Activated naive CD4-positive, alpha-beta T cell treated with anti-CD3 and anti-CD28 coated beads for 36 hours (primary cell): ENCODE measurements at regions of chr17 and their contacts with region 1.

Region 1: GRCh38 chr17:50865984-50866774 is at the start of gene TOB1:
- DNase-seq: peak; percentile 97
- H3K4me3 Mint-ChIP-seq: peak within 1 kb of the TSS; percentile 97
- H3K27ac Mint-ChIP-seq: peak within 1 kb of the TSS; percentile 96
- H3K4me1 Mint-ChIP-seq: peaks cover 45% of the 10 kb centered on the region
- H3K27me3 Mint-ChIP-seq: no peaks in the 10 kb centered on the region
- total RNA-seq, gene TOB1: 40.7 to 44.7 TPM

Region 2: GRCh38 chr17:50707289-50708049 is 158.7 kb before region 1 on chr17 and contains the start of gene ANKRD40:
- CTCF ChIA-PET with region 1: no interaction called
- intact Hi-C with region 1: loop called (anchors 5 kb)
- DNase-seq: peak; percentile 94
- H3K4me3 Mint-ChIP-seq: peak within 1 kb of the TSS; percentile 95
- H3K27ac Mint-ChIP-seq: peak within 1 kb of the TSS; percentile 92
- H3K4me1 Mint-ChIP-seq: peaks cover 44% of the 10 kb centered on the region
- H3K27me3 Mint-ChIP-seq: no peaks in the 10 kb centered on the region
- total RNA-seq, gene ANKRD40: 25.7 to 26.5 TPM

Region 3: GRCh38 chr17:50771991-50772785 is 94.0 kb before region 1 on chr17:
- CTCF ChIA-PET with region 1: no interaction called
- intact Hi-C with region 1: no loop called
- DNase-seq: no peak
- H3K4me3 Mint-ChIP-seq: no peak overlapping the region
- H3K27ac Mint-ChIP-seq: no peak overlapping the region
- H3K4me1 Mint-ChIP-seq: no peaks in the 10 kb centered on the region
- H3K27me3 Mint-ChIP-seq: no peaks in the 10 kb centered on the region

Region 4: DNA sequence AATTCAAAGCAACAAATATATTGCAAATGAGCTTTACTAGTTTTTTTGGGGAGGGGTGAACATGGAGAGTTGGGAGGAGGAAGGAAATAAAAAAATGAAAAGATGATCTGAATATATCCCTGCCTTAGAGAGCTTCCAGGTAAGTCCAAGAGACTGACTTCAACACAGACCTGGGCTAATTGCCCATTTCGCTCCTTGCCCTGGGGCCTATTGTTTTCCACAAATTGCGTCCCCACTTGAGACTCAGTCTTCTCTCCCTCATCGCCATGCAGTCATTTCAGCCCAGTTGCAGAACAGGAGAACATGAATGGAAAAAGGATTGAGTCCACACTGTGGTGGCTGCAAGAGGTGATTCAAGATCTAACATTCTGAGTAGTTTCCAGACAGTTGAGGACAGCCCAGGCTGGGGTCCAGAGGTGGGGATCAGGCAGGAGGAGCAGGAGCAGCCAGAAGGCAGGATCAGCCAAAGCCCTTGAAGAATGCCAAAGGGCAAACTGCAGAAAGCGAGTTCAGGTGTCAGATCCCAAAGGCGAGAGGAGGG is 21.6 kb after region 1 on chr17:
- CTCF ChIA-PET with region 1: interaction called, 4 read pairs
- intact Hi-C with region 1: loop called (anchors 1 kb)
- DNase-seq: no peak
- H3K4me3 Mint-ChIP-seq: no peak overlapping the region
- H3K27ac Mint-ChIP-seq: no peak overlapping the region
- H3K4me1 Mint-ChIP-seq: peaks cover 20% of the 10 kb centered on the region
- H3K27me3 Mint-ChIP-seq: no peaks in the 10 kb centered on the region

Region 5: GRCh38 chr17:50919321-50920085 is 53.3 kb after region 1 on chr17:
- CTCF ChIA-PET with region 1: no interaction called
- intact Hi-C with region 1: loop called (anchors 1 kb)
- DNase-seq: peak; percentile 91
- H3K4me3 Mint-ChIP-seq: peak overlapping the region; percentile 50
- H3K27ac Mint-ChIP-seq: peak overlapping the region; percentile 86
- H3K4me1 Mint-ChIP-seq: peaks cover 56% of the 10 kb centered on the region
- H3K27me3 Mint-ChIP-seq: no peaks in the 10 kb centered on the region

Region 6: DNA sequence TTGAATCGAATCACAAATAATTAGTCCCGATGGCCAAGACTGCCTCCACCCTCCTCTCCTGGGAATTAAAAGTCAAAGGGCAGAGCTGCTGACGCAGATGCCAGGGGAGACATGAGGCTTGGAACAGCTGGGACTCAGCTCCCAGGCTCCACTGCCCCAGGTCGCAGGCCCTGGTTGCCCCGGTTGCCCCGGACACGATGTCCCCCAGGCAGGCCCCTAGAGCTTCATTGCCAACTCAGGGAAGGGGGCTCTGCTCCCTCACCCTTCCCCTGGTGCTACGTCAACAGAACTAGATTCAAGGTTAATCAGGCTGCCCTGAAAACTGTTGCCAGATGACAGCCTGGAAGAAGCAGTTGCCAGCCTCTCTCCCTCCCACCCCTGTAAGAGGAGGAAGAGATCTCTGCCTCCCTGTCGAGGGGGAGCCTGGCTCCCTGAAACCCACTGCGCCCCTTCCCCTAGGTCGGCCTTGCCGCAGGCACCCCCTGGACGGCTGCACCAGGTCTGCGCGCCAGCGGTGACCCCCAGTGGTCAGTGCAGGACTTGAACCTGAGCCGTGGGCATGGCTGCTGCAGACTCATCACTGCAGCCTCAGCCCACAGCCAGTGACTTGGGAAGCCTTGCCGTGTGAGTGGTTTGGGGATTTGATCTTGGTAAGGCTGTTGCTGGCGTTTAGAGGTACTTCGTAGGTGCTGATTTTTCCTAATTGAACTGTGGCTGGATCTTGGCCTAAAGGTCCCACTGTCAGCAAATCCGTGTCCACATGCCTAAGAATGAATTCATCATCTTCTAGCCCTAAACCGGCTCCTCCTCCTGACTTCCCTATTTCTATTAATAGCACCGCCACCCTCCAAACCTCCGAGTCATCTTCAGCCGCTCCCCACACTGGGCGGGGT is 84.1 kb after region 1 on chr17:
- CTCF ChIA-PET with region 1: interaction called, 10 read pairs
- intact Hi-C with region 1: loop called (anchors 1 kb)
- DNase-seq: peak; percentile 80
- H3K4me3 Mint-ChIP-seq: no peak overlapping the region
- H3K27ac Mint-ChIP-seq: peak overlapping the region; percentile 53
- H3K4me1 Mint-ChIP-seq: peaks cover 26% of the 10 kb centered on the region
- H3K27me3 Mint-ChIP-seq: no peaks in the 10 kb centered on the region

Region 7: GRCh38 chr17:51087072-51087757 is 221.0 kb after region 1 on chr17:
- CTCF ChIA-PET with region 1: no interaction called
- intact Hi-C with region 1: no loop called
- DNase-seq: no peak
- H3K4me3 Mint-ChIP-seq: no peak overlapping the region
- H3K27ac Mint-ChIP-seq: no peak overlapping the region
- H3K4me1 Mint-ChIP-seq: peaks cover 16% of the 10 kb centered on the region
- H3K27me3 Mint-ChIP-seq: no peaks in the 10 kb centered on the region

Region 8: DNA sequence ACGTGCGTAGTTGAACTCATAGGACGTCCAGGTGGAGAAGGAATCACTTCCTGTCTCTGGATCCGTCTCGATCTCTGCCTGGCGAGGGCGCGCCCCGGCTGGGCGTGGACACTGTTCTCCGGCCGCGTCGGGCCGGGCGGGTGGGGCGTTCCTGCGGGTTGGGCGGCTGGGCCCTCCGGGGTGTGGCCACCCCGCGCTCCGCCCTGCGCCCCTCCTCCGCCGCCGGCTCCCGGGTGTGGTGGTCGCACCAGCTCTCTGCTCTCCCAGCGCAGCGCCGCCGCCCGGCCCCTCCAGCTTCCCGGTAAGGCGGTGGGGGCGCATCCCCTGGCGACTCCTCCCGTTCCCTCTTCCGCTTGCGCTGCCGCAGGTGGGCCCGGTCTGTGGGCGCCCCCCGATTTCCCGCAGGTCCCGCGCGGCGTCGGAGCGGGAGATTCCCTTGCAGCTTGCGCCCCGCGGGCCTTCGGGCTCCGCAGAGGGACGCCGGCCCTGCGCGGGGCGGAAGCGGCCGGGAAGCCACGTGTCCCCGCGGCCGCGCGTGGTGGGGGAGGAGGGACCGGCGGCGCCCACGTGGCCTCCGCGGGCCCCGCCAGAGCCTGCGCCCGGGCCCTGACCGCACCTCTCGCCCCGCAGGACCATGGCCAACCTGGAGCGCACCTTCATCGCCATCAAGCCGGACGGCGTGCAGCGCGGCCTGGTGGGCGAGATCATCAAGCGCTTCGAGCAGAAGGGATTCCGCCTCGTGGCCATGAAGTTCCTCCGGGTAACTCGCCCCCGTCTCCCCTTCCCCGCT is 300.2 kb after region 1 on chr17 and contains the start of gene NME2:
- CTCF ChIA-PET with region 1: no interaction called
- intact Hi-C with region 1: loop called (anchors 5 kb)
- DNase-seq: peak; percentile 50
- H3K4me3 Mint-ChIP-seq: peak within 1 kb of the TSS; percentile 81
- H3K27ac Mint-ChIP-seq: peak within 1 kb of the TSS; percentile 90
- H3K4me1 Mint-ChIP-seq: peaks cover 29% of the 10 kb centered on the region
- H3K27me3 Mint-ChIP-seq: no peaks in the 10 kb centered on the region
- total RNA-seq, gene NME2: 1,086 to 1,094 TPM